PC-9 (cell line): ENCODE measurements at regions of chr2 and their contacts with region 1.

Region 1: DNA sequence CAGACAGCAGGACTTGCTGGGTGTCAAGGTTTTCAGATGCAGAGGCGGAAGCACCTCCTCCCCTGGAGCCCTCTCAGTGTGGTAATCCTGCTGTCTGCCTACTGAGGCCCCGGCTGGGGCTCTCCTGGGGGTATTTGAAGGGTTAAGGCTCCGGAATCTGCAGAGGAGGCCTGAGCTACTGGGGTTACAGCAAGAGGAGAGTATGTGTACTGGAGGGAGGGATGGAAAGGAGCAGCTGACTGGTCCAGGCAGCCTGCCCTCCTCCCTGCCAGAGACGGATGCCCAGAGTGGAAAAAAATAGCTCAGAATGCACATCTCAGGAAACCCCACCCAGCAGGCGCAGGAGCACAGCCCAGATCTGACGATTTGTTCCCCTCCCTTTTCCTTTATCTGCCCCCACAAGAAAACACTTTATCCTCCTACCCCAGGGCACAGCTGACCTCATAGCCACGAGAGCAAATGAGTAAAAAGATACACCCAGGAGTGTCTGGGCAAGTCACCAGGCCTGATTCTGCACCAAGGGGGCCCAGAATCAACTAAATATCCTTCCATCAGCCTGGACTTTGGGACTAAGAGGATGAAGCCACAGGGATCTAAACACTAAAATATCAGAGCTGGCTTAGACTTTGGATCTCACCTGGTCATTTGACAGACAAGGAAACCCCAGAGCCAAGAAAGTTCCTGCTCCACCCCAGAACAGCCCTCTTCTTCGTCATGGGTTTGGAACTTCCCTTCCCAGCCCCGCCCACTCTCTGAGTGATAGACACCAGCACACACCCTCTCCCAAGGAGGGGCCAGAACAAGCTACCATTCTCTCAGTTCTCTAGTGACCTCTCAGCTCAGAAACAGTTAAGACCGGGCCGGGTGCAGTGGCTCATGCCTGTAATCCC is 5.5 kb downstream of the TMBIM1 start:
- DNase-seq: peak; percentile 89 to 93
- H3K4me3 ChIP-seq: peak overlapping the region; percentile 56
- H3K27ac ChIP-seq: peak overlapping the region; percentile 98
- H3K4me1 ChIP-seq: peaks cover 91% of the 10 kb centered on the region
- H3K27me3 ChIP-seq: no peaks in the 10 kb centered on the region
- CTCF ChIP-seq: no peak

Region 2: GRCh38 chr2:218060118-218060517 is 226.7 kb before region 1 on chr2:
- CTCF ChIA-PET with region 1: no interaction called
- POLR2A ChIA-PET with region 1: no interaction called
- intact Hi-C with region 1: no loop called
- DNase-seq: no peak
- H3K4me3 ChIP-seq: no peak overlapping the region
- H3K27ac ChIP-seq: no peak overlapping the region
- H3K4me1 ChIP-seq: no peaks in the 10 kb centered on the region
- H3K27me3 ChIP-seq: peaks cover 27% of the 10 kb centered on the region
- CTCF ChIP-seq: no peak

Region 3: DNA sequence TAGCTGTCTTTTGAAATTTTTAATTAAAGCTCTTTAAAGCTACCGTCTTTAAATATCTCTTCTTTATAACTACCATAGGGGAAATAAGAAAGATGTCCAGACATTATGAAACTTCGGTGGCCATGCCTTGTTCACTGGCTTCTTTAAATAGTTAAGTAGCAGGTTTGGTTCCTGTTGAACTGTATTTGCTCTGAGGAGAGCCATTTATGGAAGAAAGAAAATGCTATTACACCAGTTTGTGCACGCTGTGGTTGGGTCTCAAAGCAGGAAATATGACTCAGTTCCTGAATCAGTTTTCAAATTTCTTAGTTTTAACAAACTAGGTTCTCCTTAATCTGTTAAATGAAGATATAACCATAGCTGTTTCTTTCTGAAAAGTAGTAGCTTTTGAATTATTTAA is 57.6 kb before region 1 on chr2:
- CTCF ChIA-PET with region 1: no interaction called
- POLR2A ChIA-PET with region 1: interaction called, 10 read pairs
- intact Hi-C with region 1: no loop called
- DNase-seq: peak; percentile 33 to 83
- H3K4me3 ChIP-seq: no peak overlapping the region
- H3K27ac ChIP-seq: peak overlapping the region; percentile 81
- H3K4me1 ChIP-seq: peaks cover 32% of the 10 kb centered on the region
- H3K27me3 ChIP-seq: no peaks in the 10 kb centered on the region
- CTCF ChIP-seq: no peak

Region 4: GRCh38 chr2:218322895-218323808 is 36.3 kb after region 1 on chr2:
- CTCF ChIA-PET with region 1: interaction called, 4 read pairs
- POLR2A ChIA-PET with region 1: interaction called, 14 read pairs
- intact Hi-C with region 1: no loop called
- DNase-seq: peak; percentile 66 to 94
- H3K4me3 ChIP-seq: peak overlapping the region; percentile 66
- H3K27ac ChIP-seq: peak overlapping the region; percentile 88
- H3K4me1 ChIP-seq: peaks cover 46% of the 10 kb centered on the region
- H3K27me3 ChIP-seq: no peaks in the 10 kb centered on the region
- CTCF ChIP-seq: no peak